Tibial artery (tissue), 4 donors: ENCODE measurements at regions of chr2 and their contacts with region 1.

Region 1: GRCh38 chr2:7044261-7045250 is 127.3 kb downstream of the RNF144A start:
- DNase-seq: peak; percentile 59 to 78
- H3K4me3 ChIP-seq: no peak overlapping the region
- H3K27ac ChIP-seq: peak overlapping the region in 1 of 2 donors; percentile 36
- H3K4me1 ChIP-seq: peaks cover 0 to 13% (median 0%) of the 10 kb centered on the region in 4 donors
- H3K27me3 ChIP-seq: no peaks in the 10 kb centered on the region
- CTCF ChIP-seq: peak; percentile 79 to 88

Region 2: GRCh38 chr2:6896930-6897759 is 147.4 kb before region 1 on chr2:
- intact Hi-C with region 1: loop called (anchors 10 kb)
- DNase-seq: no peak
- H3K4me3 ChIP-seq: no peak overlapping the region
- H3K27ac ChIP-seq: no peak overlapping the region
- H3K4me1 ChIP-seq: no peaks in the 10 kb centered on the region
- H3K27me3 ChIP-seq: no peaks in the 10 kb centered on the region
- CTCF ChIP-seq: peak; percentile 57 to 62